Prostate gland (tissue), 2 donors: ENCODE measurements at regions of chr20 and their contacts with region 1.

Region 1: DNA sequence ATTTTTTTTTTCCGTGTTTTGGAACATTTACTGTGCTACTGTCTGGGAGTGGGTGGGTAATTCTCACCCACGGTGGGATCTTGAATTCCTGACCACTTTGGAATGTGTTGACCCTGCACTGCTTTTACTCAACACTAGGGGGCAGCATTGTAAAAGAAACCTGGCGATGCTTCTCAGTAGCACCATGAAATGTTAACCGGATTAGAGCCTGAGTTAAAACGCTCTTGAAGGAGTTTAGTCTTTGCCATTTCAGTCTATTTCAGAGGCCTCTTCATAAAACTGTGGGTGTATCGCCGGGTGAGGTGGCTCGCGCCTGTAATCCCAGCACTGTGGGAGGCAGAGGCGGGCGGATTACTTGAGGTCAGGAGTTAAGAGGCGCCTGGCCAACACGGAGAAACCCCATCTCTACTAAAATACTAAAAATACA is 114.4 kb upstream of the PRND start:
- DNase-seq: peak; percentile 44
- H3K4me3 ChIP-seq: no peak overlapping the region
- H3K27ac ChIP-seq: no peak overlapping the region
- H3K4me1 ChIP-seq: no peaks in the 10 kb centered on the region
- H3K27me3 ChIP-seq: no peaks in the 10 kb centered on the region
- CTCF ChIP-seq: peak; percentile 91 to 94 (median 92)
- POLR2A ChIP-seq: no peak

Region 2: GRCh38 chr20:4160761-4161305 is 446.5 kb before region 1 on chr20:
- intact Hi-C with region 1: no loop called
- DNase-seq: no peak
- H3K4me3 ChIP-seq: no peak overlapping the region
- H3K27ac ChIP-seq: no peak overlapping the region
- H3K4me1 ChIP-seq: peaks cover 6% of the 10 kb centered on the region
- H3K27me3 ChIP-seq: no peaks in the 10 kb centered on the region
- CTCF ChIP-seq: no peak
- POLR2A ChIP-seq: no peak

Region 3: DNA sequence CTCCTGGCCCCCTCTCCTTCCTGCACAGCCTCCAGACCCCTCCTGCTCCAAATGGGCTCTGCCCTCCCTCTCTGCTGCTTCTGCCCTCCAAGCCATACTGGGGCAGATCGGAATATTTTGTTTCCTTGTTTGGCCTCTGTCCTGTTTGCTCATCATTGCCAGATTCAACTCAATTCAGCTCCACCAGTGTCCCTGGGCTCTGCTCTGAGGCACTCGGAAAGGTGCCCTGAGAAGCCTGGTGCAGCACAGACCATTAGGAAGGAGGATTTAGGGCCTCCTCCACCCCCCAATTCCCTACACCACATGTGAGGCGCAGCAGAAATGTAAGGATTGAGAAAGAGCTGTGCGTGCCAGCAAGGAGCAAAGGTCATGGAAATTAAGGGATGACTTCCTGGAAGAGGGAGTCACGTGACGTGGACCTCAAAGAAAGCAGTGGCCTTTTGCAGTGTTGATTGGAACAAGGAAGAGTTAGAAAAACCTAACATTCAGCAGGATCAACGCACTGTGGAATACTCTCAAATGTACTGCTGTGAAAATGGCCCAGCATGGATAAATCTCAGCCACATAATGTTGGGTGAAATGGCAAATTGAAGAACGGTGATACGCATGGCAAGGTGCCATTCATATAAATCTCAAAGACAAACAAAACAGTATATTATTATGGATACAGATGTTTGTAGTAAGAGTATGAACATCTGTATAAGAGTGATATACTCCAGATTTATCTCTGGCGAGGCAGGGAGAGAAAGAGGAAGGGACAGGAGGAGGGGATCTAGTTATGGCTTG is 362.4 kb before region 1 on chr20:
- intact Hi-C with region 1: no loop called
- DNase-seq: no peak
- H3K4me3 ChIP-seq: no peak overlapping the region
- H3K27ac ChIP-seq: no peak overlapping the region
- H3K4me1 ChIP-seq: no peaks in the 10 kb centered on the region
- H3K27me3 ChIP-seq: peaks cover 3% of the 10 kb centered on the region
- CTCF ChIP-seq: no peak
- POLR2A ChIP-seq: no peak

Region 4: GRCh38 chr20:4720041-4720976 is 113.0 kb after region 1 on chr20:
- intact Hi-C with region 1: loop called (anchors 1 kb)
- DNase-seq: peak; percentile 52
- H3K4me3 ChIP-seq: no peak overlapping the region
- H3K27ac ChIP-seq: peak overlapping the region in 1 of 2 donors; percentile 37
- H3K4me1 ChIP-seq: no peaks in the 10 kb centered on the region
- H3K27me3 ChIP-seq: no peaks in the 10 kb centered on the region
- CTCF ChIP-seq: peak; percentile 42 to 85 (median 68)
- POLR2A ChIP-seq: no peak

Region 5: DNA sequence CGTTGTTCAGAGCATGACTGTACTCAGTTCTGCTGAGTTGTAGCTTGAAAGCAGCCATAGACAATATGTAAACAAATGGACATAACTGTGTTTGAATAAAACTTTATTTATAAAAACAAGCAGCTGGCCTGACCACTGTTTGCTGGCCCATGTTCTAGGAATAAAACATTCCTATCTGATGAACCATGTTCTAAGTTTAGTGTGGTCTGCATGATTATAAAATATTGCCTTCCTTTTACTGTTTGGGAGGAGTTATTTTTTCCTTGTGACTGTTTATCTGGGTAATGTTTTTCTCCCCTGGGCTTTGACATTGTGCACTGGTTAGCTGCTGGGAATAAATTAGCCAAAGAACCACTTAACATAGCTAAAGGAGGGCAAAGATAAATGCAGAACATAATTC is 574.7 kb after region 1 on chr20:
- intact Hi-C with region 1: loop called (anchors 10 kb)
- DNase-seq: no peak
- H3K4me3 ChIP-seq: no peak overlapping the region
- H3K27ac ChIP-seq: no peak overlapping the region
- H3K4me1 ChIP-seq: no peaks in the 10 kb centered on the region
- H3K27me3 ChIP-seq: no peaks in the 10 kb centered on the region
- CTCF ChIP-seq: no peak
- POLR2A ChIP-seq: no peak